ENCODE measurements at regions of chr11 and their contacts with region 1.

Region 1: GRCh38 chr11:108008656-108009496 is at the start of gene CUL5:
- DNase-seq: peak; percentile 53 to 93
- H3K4me3 ChIP-seq: peak within 1 kb of the TSS; percentile 80 to 84
- H3K27ac ChIP-seq: peak within 1 kb of the TSS; percentile 97 to 99
- H3K4me1 ChIP-seq: peaks cover 4 to 10% of the 10 kb centered on the region in 2 donors
- H3K27me3 ChIP-seq: no peaks in the 10 kb centered on the region
- CTCF ChIP-seq: peak; percentile 79 to 95 (median 85)
- total RNA-seq, gene CUL5: 6.0 TPM

Region 2: DNA sequence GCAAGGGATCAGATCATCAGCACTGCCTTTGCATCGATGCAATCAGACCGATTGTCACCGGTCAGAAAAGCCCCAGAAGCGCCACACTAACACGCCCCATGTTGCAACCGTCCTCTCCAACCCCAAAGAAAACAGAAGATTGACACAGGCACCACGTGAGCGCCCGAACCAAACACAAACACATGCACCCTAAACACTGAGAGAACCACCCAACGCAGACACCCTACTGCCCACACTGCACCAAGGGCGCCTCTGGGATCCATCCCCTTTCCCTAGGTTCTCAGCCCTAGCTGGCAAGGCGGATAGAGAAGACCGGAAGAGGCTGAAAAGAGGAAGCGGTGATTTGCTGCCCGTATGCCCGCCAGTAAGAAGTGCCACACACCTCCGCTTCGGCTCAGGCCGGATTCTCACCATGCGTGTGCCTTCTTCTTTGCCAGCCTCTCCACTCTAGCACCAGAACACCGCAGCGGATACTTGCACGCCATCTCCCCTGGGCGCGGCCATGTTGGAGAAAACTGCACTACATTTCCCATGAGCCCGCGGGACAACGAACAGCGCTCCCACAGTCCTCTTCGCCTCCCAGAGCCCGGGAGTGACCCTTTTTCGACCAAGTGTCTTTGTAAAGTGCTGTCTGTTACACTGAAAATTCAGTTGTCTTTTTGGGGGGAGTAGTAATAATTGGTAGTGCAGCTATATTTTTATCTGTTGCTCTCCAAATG is 443.5 kb before region 1 on chr11 and contains the start of gene ALKBH8:
- intact Hi-C with region 1: loop called (anchors 1 kb)
- DNase-seq: peak in 1 of 2 donors; percentile 89
- H3K4me3 ChIP-seq: peak within 1 kb of the TSS; percentile 80 to 90
- H3K27ac ChIP-seq: peak within 1 kb of the TSS; percentile 68 to 73
- H3K4me1 ChIP-seq: peaks cover 5 to 7% of the 10 kb centered on the region in 2 donors
- H3K27me3 ChIP-seq: no peaks in the 10 kb centered on the region
- CTCF ChIP-seq: peak in 1 of 3 experiments; percentile 3
- total RNA-seq, gene ALKBH8: 0.32 TPM

Region 3: DNA sequence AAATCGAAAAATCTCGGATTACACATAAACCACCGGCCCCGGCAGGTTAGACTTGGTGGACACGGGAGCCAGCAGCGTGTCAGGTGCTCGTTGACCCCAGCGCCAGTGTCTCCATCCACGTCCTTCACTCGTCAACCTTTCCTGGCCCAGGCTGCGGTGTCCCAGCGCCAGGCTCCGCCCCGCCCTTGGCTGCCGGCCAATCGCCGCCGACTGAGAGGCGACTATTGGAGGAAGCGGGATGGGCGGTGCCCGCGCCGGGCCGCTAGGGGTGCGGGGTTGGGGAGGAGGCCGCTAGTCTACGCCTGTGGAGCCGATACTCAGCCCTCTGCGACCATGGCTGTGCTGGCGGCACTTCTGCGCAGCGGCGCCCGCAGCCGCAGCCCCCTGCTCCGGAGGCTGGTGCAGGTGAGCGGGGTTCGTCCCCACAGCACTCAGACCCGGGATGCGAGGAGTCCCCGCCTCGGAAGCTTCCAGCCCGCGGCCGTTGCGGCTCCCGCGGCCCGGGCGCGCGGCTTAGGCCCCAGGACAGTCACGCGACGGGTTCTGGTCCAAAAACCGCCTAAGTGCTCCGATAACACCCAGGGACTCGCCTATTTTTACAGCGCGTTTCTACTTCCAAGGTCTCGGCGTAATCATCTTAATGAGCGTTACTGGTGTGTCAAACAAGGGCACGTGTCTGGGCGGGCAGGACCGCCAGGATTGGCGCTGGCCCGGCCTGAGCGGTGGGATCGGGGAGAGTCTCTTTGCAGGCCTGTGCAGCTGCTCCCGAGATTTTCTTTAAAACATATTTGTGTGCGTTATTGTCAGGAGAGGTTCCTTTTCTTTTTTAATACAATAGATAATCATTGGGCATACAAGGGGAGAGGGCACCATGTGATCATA is 112.6 kb after region 1 on chr11 and contains the start of gene ACAT1:
- intact Hi-C with region 1: loop called (anchors 1 kb)
- DNase-seq: peak; percentile 96 to 99
- H3K4me3 ChIP-seq: peak within 1 kb of the TSS; percentile 84 to 92
- H3K27ac ChIP-seq: peak within 1 kb of the TSS; percentile 96 to 97
- H3K4me1 ChIP-seq: peaks cover 0 to 20% of the 10 kb centered on the region in 2 donors
- H3K27me3 ChIP-seq: no peaks in the 10 kb centered on the region
- CTCF ChIP-seq: peak in 2 of 3 experiments; percentile 9 to 39
- total RNA-seq, gene ACAT1: 187 TPM

Region 4: DNA sequence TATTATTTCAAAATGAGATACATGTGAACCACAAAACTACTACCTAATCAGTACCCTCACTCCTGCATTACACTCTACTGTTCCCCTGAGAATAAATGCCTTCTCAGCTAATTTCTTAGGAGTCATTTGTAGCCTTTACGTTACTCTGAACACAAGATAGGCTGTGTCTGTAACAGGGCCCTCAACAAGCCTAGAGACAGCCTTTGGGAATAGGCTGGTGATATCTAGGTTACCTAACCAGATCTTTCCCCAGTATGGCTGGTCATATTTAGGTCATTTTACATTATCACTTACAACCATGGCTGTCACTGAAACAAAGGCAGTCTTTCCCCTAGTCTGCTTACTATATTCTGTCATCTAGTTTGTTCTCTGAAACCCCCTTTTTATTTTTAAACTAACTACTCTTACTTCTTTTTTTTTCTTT is 228.2 kb after region 1 on chr11:
- intact Hi-C with region 1: no loop called
- DNase-seq: no peak
- H3K4me3 ChIP-seq: no peak overlapping the region
- H3K27ac ChIP-seq: no peak overlapping the region
- H3K4me1 ChIP-seq: no peaks in the 10 kb centered on the region
- H3K27me3 ChIP-seq: no peaks in the 10 kb centered on the region
- CTCF ChIP-seq: no peak

Region 5: DNA sequence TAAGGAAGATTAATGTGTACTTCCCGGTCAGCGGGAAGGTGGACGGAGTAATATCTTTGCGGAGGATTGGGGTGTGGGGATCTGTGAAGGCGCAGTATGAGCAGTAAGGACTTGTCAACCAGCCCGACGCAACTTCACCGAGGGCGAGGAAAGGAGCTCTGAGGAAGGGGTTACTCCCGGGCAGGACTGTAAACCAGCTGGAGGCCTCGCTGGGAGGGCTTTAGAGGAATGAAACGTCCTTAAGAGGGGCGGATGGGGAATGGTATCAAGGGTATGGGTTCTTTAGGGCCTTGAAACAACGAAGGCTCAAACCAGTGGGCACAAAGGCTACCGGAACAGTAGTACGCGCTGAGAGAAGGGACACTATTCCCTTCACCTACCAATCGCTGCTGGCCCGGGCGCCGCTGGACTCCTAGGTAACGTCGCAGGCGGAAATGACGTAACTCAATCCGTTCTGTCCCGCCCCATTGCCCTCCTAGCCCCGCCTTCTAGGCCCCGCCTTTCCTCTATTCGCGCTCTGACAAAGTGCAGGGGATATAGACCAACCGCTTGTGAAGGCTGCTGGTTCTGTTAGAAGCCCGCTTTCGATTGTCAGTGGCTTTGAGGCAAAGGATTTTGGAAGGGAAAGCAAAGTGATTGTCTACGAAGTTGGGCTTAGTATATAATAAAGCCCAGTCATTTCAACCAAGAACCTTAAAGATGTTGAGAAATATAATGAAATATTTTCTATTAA is 458.4 kb after region 1 on chr11 and contains the start of gene C11orf65:
- intact Hi-C with region 1: loop called (anchors 5 kb)
- DNase-seq: peak; percentile 85 to 98
- H3K4me3 ChIP-seq: peak within 1 kb of the TSS; percentile 73 to 74
- H3K27ac ChIP-seq: peak within 1 kb of the TSS; percentile 97
- H3K4me1 ChIP-seq: peaks cover 0 to 7% of the 10 kb centered on the region in 2 donors
- H3K27me3 ChIP-seq: no peaks in the 10 kb centered on the region
- CTCF ChIP-seq: no peak
- total RNA-seq, gene C11orf65: not detected

Measured in ascending aorta (tissue), 2 donors.